Activated CD4-positive, alpha-beta T cell treated with anti-CD3 and anti-CD28 coated beads for 36 hours (primary cell): ENCODE measurements at regions of chr16 and their contacts with region 1.

Region 1: GRCh38 chr16:8878521-8878911 is 3.6 kb upstream of the LITAFD start:
- DNase-seq: no peak
- ATAC-seq: no peak
- H3K4me3 Mint-ChIP-seq: no peak overlapping the region
- H3K27ac Mint-ChIP-seq: no peak overlapping the region
- H3K4me1 Mint-ChIP-seq: peaks cover 5% of the 10 kb centered on the region
- H3K27me3 Mint-ChIP-seq: no peaks in the 10 kb centered on the region

Region 2: GRCh38 chr16:8567750-8568617 is 310.5 kb before region 1 on chr16:
- CTCF ChIA-PET with region 1: interaction called, 9 read pairs
- POLR2A ChIA-PET with region 1: no interaction called
- intact Hi-C with region 1: loop called (anchors 1 kb)
- DNase-seq: peak; percentile 87
- ATAC-seq: peak; percentile 94
- H3K4me3 Mint-ChIP-seq: no peak overlapping the region
- H3K27ac Mint-ChIP-seq: no peak overlapping the region
- H3K4me1 Mint-ChIP-seq: peaks cover 4% of the 10 kb centered on the region
- H3K27me3 Mint-ChIP-seq: peaks cover 9% of the 10 kb centered on the region

Region 3: DNA sequence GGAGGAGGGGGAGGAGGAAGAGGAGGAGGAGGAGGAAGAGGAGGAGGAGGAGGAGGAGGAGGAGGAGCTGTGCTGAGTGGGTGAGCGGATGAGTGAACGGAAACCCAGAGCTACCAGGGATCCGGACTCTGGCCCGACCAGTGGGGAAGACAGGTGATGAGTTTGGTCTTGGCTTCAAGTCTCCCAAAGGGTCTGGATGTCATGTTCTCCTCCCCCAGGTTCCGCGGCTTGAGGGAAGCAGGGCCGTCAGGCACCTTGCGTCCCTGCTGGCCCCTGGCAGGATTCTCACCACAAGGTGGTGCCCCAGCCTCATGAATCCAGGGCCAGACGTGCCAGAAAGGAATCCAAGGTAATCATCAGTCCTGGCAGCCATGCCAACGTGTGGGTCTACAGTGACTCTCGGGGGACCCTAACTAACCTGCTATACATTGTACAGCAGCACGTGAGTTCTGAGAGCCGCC is 217.6 kb before region 1 on chr16:
- CTCF ChIA-PET with region 1: interaction called, 25 read pairs
- POLR2A ChIA-PET with region 1: no interaction called
- intact Hi-C with region 1: loop called (anchors 1 kb)
- DNase-seq: peak; percentile 84
- ATAC-seq: peak; percentile 88
- H3K4me3 Mint-ChIP-seq: no peak overlapping the region
- H3K27ac Mint-ChIP-seq: no peak overlapping the region
- H3K4me1 Mint-ChIP-seq: peaks cover 4% of the 10 kb centered on the region
- H3K27me3 Mint-ChIP-seq: no peaks in the 10 kb centered on the region

Region 4: DNA sequence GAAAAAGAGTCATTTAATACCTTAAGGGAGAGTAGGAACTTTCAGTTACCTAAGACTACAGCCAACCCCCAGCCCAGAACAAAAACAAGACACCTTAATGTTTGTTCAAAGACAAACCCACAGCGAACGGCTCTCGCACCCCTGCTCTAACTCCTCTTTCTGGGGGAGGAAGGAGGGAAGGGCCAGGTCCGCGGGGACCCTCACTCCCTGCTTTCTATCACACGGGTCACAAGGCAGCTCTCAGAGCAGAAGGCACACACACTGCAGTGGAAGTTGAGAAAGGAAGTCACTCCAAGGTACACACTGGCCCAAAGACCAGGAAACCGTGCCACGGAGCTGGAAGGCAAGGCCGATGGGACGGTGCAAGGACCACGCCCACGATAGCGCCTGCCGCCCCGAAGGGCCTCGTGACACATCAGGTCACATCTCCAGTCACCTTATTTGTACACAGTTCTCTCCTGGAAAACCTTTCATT is 13.6 kb after region 1 on chr16:
- CTCF ChIA-PET with region 1: interaction called, 31 read pairs
- POLR2A ChIA-PET with region 1: no interaction called
- intact Hi-C with region 1: no loop called
- DNase-seq: peak; percentile 48
- ATAC-seq: peak; percentile 27
- H3K4me3 Mint-ChIP-seq: peak overlapping the region; percentile 6
- H3K27ac Mint-ChIP-seq: peak overlapping the region; percentile 87
- H3K4me1 Mint-ChIP-seq: peaks cover 10% of the 10 kb centered on the region
- H3K27me3 Mint-ChIP-seq: no peaks in the 10 kb centered on the region